ENCODE measurements at regions of chr11 and their contacts with region 1.

Region 1: GRCh38 chr11:69500285-69501132 is 19.0 kb downstream of the LINC01488 start:
- DNase-seq: no peak
- H3K4me3 ChIP-seq: no peak overlapping the region
- H3K27ac ChIP-seq: no peak overlapping the region
- H3K4me1 ChIP-seq: peaks cover 13% of the 10 kb centered on the region
- H3K27me3 ChIP-seq: no peaks in the 10 kb centered on the region
- CTCF ChIP-seq: no peak

Region 2: DNA sequence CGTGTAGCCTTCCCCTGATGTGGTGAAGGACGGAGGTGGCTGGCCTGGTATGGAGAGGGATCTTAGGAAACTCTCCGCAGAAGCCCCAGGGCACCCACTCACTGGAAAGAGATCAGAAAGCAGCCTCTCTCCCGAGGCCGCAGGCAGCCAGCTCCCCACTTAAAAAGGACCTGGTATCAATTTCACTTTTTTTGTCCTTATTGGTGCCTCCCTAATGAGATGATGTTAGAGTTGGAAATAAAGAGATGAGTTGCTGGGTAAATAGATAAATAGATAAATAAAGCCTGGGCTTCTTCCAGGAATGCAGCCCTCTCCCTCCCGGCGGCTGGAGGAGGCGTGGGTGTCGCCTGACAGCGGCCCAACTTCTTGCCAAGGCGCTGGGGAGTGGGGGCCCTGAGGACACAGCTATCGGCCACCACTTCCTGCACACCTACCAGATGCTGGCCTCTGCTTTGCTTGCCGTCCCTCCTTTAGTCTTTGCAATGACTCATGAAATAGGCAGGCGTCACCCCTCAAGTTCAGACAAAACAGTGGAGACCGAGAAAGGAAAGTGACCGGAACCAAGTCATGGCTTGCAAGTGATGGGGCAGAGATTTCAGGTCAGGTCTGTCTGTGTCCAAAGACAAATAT is 23.9 kb after region 1 on chr11:
- CTCF ChIA-PET with region 1: no interaction called
- dilution Hi-C with region 1: no loop called
- in situ Hi-C with region 1: no loop called
- intact Hi-C with region 1: loop called (anchors 2 kb)
- DNase-seq: peak; percentile 78
- H3K4me3 ChIP-seq: peak overlapping the region in 1 of 3 experiments; percentile 15
- H3K27ac ChIP-seq: peak overlapping the region; percentile 28
- H3K4me1 ChIP-seq: peaks cover 22% of the 10 kb centered on the region
- H3K27me3 ChIP-seq: no peaks in the 10 kb centered on the region
- CTCF ChIP-seq: no peak

Measured in mammary epithelial cell (primary cell).